A549 (cell line): ENCODE measurements at regions of chr6 and their contacts with region 1.

Region 1: DNA sequence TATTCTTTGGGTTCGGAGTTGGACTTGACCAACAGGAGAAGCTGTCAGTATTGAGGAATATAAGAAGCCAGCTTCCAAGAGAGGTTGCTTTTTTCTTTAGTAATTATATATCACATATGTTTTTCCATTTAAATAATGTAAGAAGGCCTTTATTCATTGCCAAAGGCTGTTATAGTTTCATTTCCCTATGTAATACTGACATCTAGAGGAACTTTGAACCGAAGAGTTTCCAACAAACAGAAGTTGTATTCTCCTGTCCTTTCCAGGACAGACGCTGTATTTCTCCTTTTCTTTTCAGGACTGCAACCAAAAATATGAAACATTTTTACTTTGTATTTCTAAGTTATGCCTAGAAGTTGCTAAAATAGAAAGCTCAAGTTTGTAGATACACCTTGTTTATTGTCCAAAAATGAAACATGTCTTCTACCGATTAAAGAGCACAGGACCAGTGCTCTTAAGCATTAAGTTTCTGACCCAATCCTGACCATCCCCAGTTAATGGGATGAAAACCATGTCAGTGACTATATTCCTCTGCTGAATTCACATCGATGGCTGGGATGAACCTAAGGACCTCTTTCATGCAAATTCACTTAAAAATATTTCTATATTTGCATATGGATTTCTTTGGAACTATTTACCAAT is 55.1 kb downstream of the MYLK4 start:
- DNase-seq: peak in 1 of 2 experiments; percentile 10
- ATAC-seq: peak; percentile 59 to 61; a peak in 3 of 6 replicates
- H3K4me3 ChIP-seq: no peak overlapping the region
- H3K27ac ChIP-seq: no peak overlapping the region
- H3K4me1 ChIP-seq: no peaks in the 10 kb centered on the region
- CTCF ChIP-seq: peak; percentile 63
- EP300 ChIP-seq: no peak
- POLR2A ChIP-seq: no peak
- RAD21 ChIP-seq: peak; percentile 67 to 71

Region 2: DNA sequence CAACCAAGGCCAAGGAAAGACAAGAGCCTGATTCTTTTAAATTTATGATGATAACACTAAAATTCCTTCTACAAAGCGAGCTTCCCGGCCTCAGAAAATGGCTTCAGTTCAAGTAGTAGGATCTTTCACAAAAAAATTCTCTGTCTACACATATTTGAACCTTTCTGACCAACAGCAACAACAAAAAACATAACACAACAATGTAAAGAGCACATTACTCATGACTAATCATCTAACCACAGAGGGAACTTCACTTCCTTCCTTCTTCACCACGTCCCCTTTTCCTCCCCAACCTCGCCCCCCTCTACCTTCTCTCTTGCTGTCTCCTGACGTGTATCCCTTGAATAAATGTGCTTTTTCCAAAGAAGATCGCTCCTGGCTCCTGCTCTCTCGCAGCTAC is 173.1 kb before region 1 on chr6:
- CTCF ChIA-PET with region 1: no interaction called
- POLR2A ChIA-PET with region 1: no interaction called
- DNase-seq: no peak
- ATAC-seq: no peak
- H3K4me3 ChIP-seq: no peak overlapping the region
- H3K27ac ChIP-seq: no peak overlapping the region
- H3K4me1 ChIP-seq: no peaks in the 10 kb centered on the region; the same call in 2 of the 3 replicates
- CTCF ChIP-seq: no peak
- EP300 ChIP-seq: no peak
- POLR2A ChIP-seq: no peak
- RAD21 ChIP-seq: no peak

Region 3: GRCh38 chr6:2684059-2684749 is 11.4 kb before region 1 on chr6:
- CTCF ChIA-PET with region 1: interaction called, 16 read pairs
- POLR2A ChIA-PET with region 1: no interaction called
- DNase-seq: peak; percentile 46 to 67
- ATAC-seq: peak; percentile 50 to 80; a peak in 4 of 6 replicates
- H3K4me3 ChIP-seq: no peak overlapping the region
- H3K27ac ChIP-seq: peak overlapping the region; percentile 19 to 67; a peak in 5 of 6 replicates
- H3K4me1 ChIP-seq: peaks cover 7% of the 10 kb centered on the region; the same call in 1 of the 3 replicates
- CTCF ChIP-seq: no peak
- EP300 ChIP-seq: no peak
- POLR2A ChIP-seq: no peak
- RAD21 ChIP-seq: no peak

Region 4: DNA sequence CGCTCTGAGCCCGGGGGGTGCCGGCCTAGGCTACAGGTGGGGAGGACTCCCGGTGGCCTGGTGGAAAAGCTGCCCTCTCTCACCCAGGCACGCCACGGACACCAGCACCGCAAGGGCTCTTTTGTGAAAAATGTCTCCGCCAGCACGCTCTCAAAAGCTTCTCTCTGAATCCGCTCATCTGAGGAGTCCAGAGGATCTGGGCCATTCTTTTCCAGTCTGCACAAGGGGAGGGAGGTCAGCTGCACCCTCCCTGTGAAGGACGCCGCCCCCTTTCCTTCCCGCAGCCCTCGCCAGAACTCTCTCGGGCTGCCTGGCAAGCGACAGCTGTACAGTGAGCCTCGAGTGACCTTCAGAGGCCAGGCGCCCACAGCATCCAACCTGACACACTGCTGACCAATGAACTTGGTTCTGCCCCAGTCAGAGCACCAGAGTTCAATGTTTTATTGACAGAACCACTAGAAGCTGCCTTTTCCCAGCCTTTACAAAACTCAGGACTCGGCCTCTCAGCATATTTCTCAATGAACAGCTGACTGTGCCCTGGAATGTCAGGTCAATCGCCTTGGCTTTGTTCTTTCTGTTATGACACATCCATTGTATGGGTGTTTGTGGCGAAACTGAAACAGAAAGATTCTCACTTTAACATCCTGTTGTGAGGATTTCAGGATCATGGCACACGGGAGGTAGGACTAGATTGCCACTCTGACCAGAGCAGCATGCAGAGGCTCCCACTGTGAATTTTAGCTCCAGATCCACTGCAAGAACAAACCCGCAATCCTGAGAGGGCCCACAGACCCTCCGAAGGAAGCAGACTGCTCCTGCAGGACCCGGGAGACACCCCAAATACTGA is 180.9 kb after region 1 on chr6:
- CTCF ChIA-PET with region 1: no interaction called
- POLR2A ChIA-PET with region 1: no interaction called
- DNase-seq: peak; percentile 74 to 86
- ATAC-seq: peak; percentile 87 to 92
- H3K4me3 ChIP-seq: peak overlapping the region; percentile 44
- H3K27ac ChIP-seq: peak overlapping the region; percentile 96 to 100
- H3K4me1 ChIP-seq: peaks cover 39% of the 10 kb centered on the region
- CTCF ChIP-seq: no peak
- EP300 ChIP-seq: 0 out of 5 replicates have a peak, but pooled peaks of 1 of the 2 experiments have one; percentile 15
- POLR2A ChIP-seq: peak; percentile 23; the same call in 1 of the 2 replicates
- RAD21 ChIP-seq: no peak; a peak in 1 of 5 replicates